H1 (cell line): ENCODE measurements at regions of chr4 and their contacts with region 1.

Region 1: GRCh38 chr4:8795774-8796495 is 75.7 kb downstream of the HMX1 start:
- DNase-seq: no peak
- H3K4me3 ChIP-seq: no peak overlapping the region
- H3K27ac ChIP-seq: no peak overlapping the region
- H3K4me1 ChIP-seq: no peaks in the 10 kb centered on the region
- H3K27me3 ChIP-seq: no peaks in the 10 kb centered on the region; a peak in 1 of 7 replicates
- CTCF ChIP-seq: no peak
- EP300 ChIP-seq: no peak
- POLR2A ChIP-seq: no peak
- RAD21 ChIP-seq: no peak

Region 2: GRCh38 chr4:8819473-8820177 is 23.7 kb after region 1 on chr4:
- CTCF ChIA-PET with region 1: interaction called, 25 read pairs
- POLR2A ChIA-PET with region 1: interaction called, 3 read pairs
- DNase-seq: peak in 1 of 2 experiments; percentile 47
- H3K4me3 ChIP-seq: no peak overlapping the region
- H3K27ac ChIP-seq: no peak overlapping the region
- H3K4me1 ChIP-seq: no peaks in the 10 kb centered on the region
- H3K27me3 ChIP-seq: no peaks in the 10 kb centered on the region; a peak in 1 of 7 replicates
- CTCF ChIP-seq: peak; percentile 49 to 69 (median 50)
- EP300 ChIP-seq: no peak
- POLR2A ChIP-seq: no peak
- RAD21 ChIP-seq: peak; percentile 25 to 45; a peak in 3 of 4 replicates